ENCODE measurements at regions of chr2 and their contacts with region 1.

Region 1: GRCh38 chr2:45860136-45861121 is 209.0 kb downstream of the PRKCE start:
- DNase-seq: peak in 9 of 10 donors; percentile 45 to 82 (median 70)
- H3K4me3 ChIP-seq: peak overlapping the region; percentile 12 to 64 (median 42)
- H3K27ac ChIP-seq: peak overlapping the region in 41 of 59 donors; percentile 0 to 78 (median 41)
- H3K27me3 ChIP-seq: no peaks in the 10 kb centered on the region
- CTCF ChIP-seq: peak in 1 of 56 donors; percentile 12

Region 2: DNA sequence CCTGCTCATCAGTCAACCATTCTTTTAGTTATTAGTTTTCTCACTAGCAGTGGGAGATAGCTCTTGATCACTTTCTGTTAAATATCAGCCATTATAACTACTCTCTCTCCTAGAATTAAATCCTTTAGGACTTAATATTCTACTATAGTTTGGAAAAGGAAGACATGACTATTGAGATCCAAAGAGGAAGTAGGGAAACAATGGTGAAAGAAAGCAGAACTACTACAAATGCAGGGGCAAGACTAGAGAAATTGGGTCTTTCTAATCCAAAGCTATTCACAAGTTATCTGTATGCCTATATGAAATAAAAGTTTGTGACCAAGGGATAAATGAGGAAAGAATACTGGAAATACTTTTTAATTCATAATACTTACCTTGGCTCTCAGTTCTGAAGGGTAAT is 314.5 kb before region 1 on chr2:
- intact Hi-C with region 1: no loop called
- DNase-seq: no peak
- H3K4me3 ChIP-seq: no peak overlapping the region
- H3K27ac ChIP-seq: no peak overlapping the region
- H3K27me3 ChIP-seq: no peaks in the 10 kb centered on the region
- CTCF ChIP-seq: no peak

Region 3: GRCh38 chr2:45650851-45651414 is 209.5 kb before region 1 on chr2:
- intact Hi-C with region 1: loop called in 1 of 2 experiments (anchors 5 kb)
- DNase-seq: peak; percentile 81 to 94 (median 92)
- H3K4me3 ChIP-seq: peak overlapping the region; percentile 61 to 95 (median 85)
- H3K27ac ChIP-seq: peak overlapping the region; percentile 63 to 98 (median 93)
- H3K27me3 ChIP-seq: no peaks in the 10 kb centered on the region
- CTCF ChIP-seq: peak in 41 of 56 donors; percentile 13 to 60 (median 35)